Right ventricle myocardium superior (tissue), 1 donor: ENCODE measurements at regions of chr9 and their contacts with region 1.

Region 1: GRCh38 chr9:101235105-101235866 is 149.5 kb downstream of the BAAT start:
- DNase-seq: no peak
- ATAC-seq: peak; percentile 53

Region 2: DNA sequence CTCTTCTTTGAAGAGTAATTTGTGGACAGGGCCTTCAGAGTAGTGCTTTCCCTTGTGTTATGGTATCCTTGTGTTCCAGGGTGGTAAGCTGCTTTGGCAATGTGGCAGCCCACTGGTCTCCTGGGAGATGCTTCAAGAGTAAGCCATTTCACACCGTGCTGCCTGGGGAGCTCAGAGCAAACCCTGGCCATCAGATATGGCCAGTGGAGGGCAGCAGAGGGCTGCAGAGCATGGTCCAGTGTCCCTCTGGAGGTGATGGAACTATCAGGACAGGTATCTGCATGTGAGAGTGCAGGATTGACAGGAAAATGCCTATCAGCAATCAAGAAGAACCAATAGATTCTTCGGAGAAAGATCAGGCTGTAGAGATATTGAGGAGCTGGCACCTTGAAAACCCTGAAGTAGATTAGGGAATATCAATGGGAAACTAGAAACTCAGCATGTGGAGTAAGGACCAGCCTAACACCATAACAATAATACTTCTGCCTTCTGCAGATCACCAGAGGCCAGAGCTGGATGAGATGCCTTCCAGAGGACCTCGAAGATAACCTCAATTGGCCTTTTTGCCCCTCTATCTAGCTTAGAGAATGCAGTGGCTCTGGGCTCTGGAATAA is 116.0 kb before region 1 on chr9:
- intact Hi-C with region 1: loop called (anchors 5 kb)
- DNase-seq: peak; percentile 45
- ATAC-seq: peak; percentile 74

Region 3: DNA sequence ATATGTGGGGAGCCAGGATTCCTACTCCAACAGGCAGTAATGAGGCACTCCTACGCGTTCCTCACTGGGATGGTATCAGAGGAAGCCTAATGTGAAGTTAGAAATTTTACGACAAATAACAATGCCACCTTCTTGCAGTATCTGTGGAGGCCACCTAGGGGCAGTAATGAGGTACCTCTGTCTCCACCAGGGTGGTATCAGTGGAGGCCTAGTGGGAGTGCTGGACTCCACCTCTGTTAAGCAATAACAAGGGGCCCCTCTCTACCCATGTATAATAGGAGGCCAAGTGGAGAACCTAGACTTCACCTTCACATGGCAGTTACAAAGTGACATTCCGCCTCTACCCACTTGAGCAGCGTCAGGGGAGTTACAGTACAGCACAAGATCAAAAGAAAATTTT is 58.9 kb before region 1 on chr9:
- intact Hi-C with region 1: no loop called
- DNase-seq: no peak
- ATAC-seq: no peak

Region 4: DNA sequence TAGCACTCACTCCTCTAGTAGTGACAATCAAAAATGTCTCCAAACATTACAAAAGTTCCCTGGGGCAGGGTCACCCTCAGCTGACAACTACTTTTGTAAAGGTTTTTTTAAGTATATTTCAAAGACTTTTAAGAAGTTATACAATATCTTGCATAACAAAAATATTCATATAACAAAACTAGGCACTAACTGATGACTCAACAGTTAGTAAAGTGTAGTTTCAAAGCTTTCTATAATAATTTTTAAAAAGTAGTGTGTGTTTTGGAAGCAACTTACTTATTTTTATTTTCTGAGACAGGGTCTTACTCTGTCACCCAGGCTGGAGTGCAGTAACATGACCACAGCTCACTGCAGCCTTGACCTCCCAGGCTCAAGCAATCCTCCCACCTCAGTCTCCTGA is 64.6 kb after region 1 on chr9:
- intact Hi-C with region 1: no loop called
- DNase-seq: no peak
- ATAC-seq: no peak

Region 5: GRCh38 chr9:101354143-101354764 is 119.0 kb after region 1 on chr9:
- intact Hi-C with region 1: no loop called
- DNase-seq: no peak
- ATAC-seq: no peak